Left cardiac atrium (tissue), 4 donors: ENCODE measurements at regions of chr2 and their contacts with region 1.

Region 1: DNA sequence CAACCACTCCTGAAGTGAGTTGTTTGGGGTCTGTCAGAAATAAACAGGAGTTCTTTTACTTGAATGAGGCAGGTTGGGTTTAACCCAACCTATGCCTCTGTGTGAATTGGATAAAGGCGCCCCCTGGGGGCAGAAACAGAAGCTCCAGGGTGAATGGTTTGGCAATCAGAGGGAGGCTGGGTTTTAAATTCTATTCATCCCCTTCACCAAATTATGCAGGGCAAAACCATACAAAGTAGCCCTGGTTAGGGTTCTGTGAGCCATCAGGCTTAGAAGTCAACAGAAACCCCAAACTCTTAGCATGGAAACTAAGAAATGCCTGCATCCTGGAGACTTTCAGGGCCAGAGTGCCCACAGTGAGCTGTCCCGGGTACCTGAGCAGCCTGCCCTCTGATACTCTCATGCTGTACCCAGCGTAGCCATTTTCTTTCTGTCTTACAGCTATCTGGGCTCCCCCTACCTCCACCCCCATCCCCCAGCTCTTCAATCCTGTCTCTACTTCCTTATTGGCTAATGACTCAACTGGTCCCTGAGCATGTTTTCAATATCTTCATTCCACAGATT is 241.5 kb downstream of the ICOS start:
- DNase-seq: peak; percentile 59
- ATAC-seq: peak; percentile 70 to 75

Region 2: DNA sequence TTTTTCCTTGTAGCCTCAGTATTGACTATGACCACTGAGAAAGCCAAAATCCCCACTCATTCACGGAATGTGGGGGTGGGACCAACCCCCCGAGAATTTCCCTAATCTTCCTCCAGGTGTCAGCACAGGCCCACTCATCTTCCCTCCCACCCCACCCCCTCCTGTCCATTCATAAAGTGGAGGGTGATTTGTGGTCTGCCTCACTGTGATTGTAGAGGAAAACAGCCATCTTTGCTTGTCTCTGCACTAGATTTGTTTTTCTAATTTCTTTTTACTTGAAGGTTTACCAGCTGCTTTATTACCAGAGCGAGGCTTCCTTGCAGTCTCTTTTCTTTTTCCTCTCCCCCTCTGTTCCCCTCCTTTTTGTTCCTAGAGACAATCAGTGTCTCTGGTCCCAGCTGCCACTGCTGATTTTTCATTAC is 69.7 kb before region 1 on chr2:
- intact Hi-C with region 1: loop called in 1 of 2 experiments (anchors 5 kb)
- DNase-seq: no peak
- ATAC-seq: peak; percentile 70 to 83